ENCODE measurements at regions of chr1 and their contacts with region 1.

Region 1: DNA sequence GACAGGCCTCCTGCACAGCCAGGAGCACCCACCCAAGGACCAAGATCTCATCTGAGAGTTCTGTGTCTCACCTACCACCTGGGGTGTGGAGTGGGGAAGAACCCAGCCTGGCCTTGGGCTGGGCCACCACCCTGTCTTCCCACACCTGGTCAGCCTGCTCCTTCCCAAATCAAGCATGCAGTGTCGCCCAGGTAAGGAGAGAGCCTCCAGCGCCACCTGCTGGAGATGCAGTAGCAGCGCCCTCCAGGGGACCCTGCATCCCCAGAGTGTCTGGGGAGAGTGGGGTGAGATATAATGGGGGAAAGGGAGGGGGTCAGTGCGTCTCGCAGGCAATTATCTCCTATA is 32.3 kb downstream of the KIAA2013 start:
- DNase-seq: peak; percentile 42 to 80
- ATAC-seq: peak; percentile 90 to 94
- H3K4me3 ChIP-seq: no peak overlapping the region
- H3K27ac ChIP-seq: no peak overlapping the region
- H3K4me1 ChIP-seq: no peaks in the 10 kb centered on the region
- CTCF ChIP-seq: peak; percentile 57
- EP300 ChIP-seq: no peak
- POLR2A ChIP-seq: no peak
- RAD21 ChIP-seq: peak; percentile 61 to 80

Region 2: GRCh38 chr1:11845641-11846335 is 48.1 kb before region 1 on chr1:
- CTCF ChIA-PET with region 1: interaction called, 20 read pairs
- POLR2A ChIA-PET with region 1: no interaction called
- DNase-seq: no peak
- ATAC-seq: peak; percentile 50 to 57; a peak in 3 of 6 replicates
- H3K4me3 ChIP-seq: no peak overlapping the region
- H3K27ac ChIP-seq: no peak overlapping the region
- H3K4me1 ChIP-seq: no peaks in the 10 kb centered on the region
- CTCF ChIP-seq: no peak
- EP300 ChIP-seq: no peak
- POLR2A ChIP-seq: no peak
- RAD21 ChIP-seq: no peak

Region 3: DNA sequence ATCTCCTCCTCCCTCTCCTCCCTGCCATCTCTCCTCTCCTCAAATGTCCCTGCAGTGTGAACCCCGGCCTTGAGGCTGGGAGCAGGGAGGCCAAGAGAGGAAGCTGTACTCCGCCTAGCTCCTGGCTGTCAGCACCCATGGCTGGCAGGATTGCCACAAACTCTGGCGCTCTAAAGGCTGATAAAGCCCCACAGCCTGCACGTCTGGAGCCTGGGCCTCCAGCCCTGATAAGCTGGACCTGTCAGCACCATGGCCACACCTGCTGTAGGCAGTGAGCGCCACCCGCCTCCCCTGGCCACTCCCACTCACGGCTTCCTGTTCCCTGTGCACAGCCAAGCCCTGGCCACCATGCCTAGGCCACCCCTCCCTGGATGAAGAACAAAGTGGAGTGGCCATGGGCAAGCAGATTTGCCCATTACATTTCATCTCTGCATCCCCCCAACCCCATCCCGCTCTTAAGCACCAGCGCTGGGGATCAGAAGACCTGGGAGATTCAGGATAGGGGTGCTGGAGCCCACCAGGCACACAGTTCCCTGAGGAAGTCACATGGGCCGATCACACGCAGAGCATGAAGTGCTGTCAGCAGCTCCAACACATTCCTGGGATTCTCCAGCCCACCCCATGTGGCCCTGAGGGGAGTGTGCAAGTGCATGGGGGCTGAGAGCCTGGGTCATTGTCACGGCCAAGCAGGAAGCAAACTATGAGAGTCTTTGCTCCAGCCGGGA is 10.9 kb before region 1 on chr1:
- CTCF ChIA-PET with region 1: interaction called, 13 read pairs
- POLR2A ChIA-PET with region 1: no interaction called
- DNase-seq: no peak
- ATAC-seq: peak in 1 of 2 experiments; percentile 32; a peak in 2 of 6 replicates
- H3K4me3 ChIP-seq: no peak overlapping the region
- H3K27ac ChIP-seq: no peak overlapping the region
- H3K4me1 ChIP-seq: no peaks in the 10 kb centered on the region
- CTCF ChIP-seq: no peak
- EP300 ChIP-seq: no peak
- POLR2A ChIP-seq: no peak
- RAD21 ChIP-seq: no peak